ENCODE measurements at regions of chr1 and their contacts with region 1.

Region 1: GRCh38 chr1:43946236-43947060 is at the start of gene IPO13:
- DNase-seq: peak; percentile 96 to 99
- ATAC-seq: peak; percentile 89 to 93 (median 90)
- H3K4me3 ChIP-seq: peak within 1 kb of the TSS; percentile 79
- H3K27ac ChIP-seq: peak within 1 kb of the TSS; percentile 99
- H3K4me1 ChIP-seq: peaks cover 47% of the 10 kb centered on the region
- H3K27me3 ChIP-seq: no peaks in the 10 kb centered on the region
- CTCF ChIP-seq: peak; percentile 69
- total RNA-seq, gene IPO13: 92.4 to 140 (median 108) TPM

Region 2: GRCh38 chr1:43969746-43970466 is 23.5 kb after region 1 on chr1 and contains the start of gene DPH2:
- intact Hi-C with region 1: loop called in 1 of 2 experiments (anchors 2 kb)
- DNase-seq: peak; percentile 98 to 99
- ATAC-seq: peak; percentile 79 to 82 (median 80)
- H3K4me3 ChIP-seq: peak within 1 kb of the TSS; percentile 99
- H3K27ac ChIP-seq: peak within 1 kb of the TSS; percentile 97
- H3K4me1 ChIP-seq: peaks cover 27% of the 10 kb centered on the region
- H3K27me3 ChIP-seq: no peaks in the 10 kb centered on the region
- CTCF ChIP-seq: no peak
- total RNA-seq, gene DPH2: 37.8 to 62.9 (median 44.3) TPM

Measured in psoas muscle (tissue), 8 donors.